ENCODE measurements at regions of chr21 and their contacts with region 1.

Region 1: GRCh38 chr21:32826329-32827167 is 55.0 kb upstream of the PAXBP1 start:
- DNase-seq: no peak
- ATAC-seq: peak; percentile 76 to 80
- H3K4me3 ChIP-seq: no peak overlapping the region
- H3K27ac ChIP-seq: no peak overlapping the region
- H3K4me1 ChIP-seq: no peaks in the 10 kb centered on the region
- H3K27me3 ChIP-seq: no peaks in the 10 kb centered on the region

Region 2: GRCh38 chr21:32653311-32653901 is 173.1 kb before region 1 on chr21:
- intact Hi-C with region 1: loop called in 3 of 4 experiments (anchors 5 to 10 kb)
- DNase-seq: no peak
- ATAC-seq: peak in 1 of 2 donors; percentile 45
- H3K4me3 ChIP-seq: no peak overlapping the region
- H3K27ac ChIP-seq: no peak overlapping the region
- H3K4me1 ChIP-seq: no peaks in the 10 kb centered on the region
- H3K27me3 ChIP-seq: no peaks in the 10 kb centered on the region

Region 3: DNA sequence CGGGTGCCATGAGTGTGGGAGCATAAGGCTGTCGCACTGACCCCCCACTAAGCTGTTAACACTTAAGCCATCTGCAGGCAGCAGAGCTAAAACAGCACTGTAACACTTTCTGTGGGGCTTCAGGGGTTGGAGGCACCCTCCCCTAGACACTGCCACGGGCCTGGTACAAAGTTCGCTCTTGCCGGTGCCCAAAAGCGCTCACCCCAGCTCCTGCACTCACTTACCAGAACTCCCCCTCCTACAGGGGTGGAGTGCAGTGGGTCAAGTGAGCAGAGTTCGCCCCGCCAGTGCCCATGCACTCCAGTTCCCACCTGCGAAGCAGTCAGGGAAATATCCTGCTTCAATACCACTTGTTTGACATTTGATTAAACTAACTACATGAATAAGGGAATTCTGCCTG is 168.0 kb before region 1 on chr21:
- intact Hi-C with region 1: loop called in 3 of 4 experiments (anchors 5 to 10 kb)
- DNase-seq: no peak
- ATAC-seq: no peak
- H3K4me3 ChIP-seq: no peak overlapping the region
- H3K27ac ChIP-seq: no peak overlapping the region
- H3K4me1 ChIP-seq: no peaks in the 10 kb centered on the region
- H3K27me3 ChIP-seq: no peaks in the 10 kb centered on the region